Heart left ventricle (tissue), 16 donors: ENCODE measurements at regions of chr6 and their contacts with region 1.

Region 1: GRCh38 chr6:12585497-12586041 is 131.0 kb upstream of the PHACTR1 start:
- DNase-seq: peak in 4 of 5 donors; percentile 43 to 60 (median 52)
- ATAC-seq: peak; percentile 62 to 88 (median 72)
- H3K4me3 ChIP-seq: peak overlapping the region in 7 of 12 donors; percentile 3 to 35 (median 10)
- H3K27ac ChIP-seq: peak overlapping the region in 11 of 12 donors; percentile 26 to 90 (median 62)
- H3K4me1 ChIP-seq: peaks cover 0 to 15% (median 4%) of the 10 kb centered on the region in 12 donors
- H3K27me3 ChIP-seq: no peaks in the 10 kb centered on the region
- CTCF ChIP-seq: no peak
- POLR2A ChIP-seq: no peak

Region 2: GRCh38 chr6:12522347-12522746 is 63.2 kb before region 1 on chr6:
- intact Hi-C with region 1: no loop called
- DNase-seq: no peak
- ATAC-seq: no peak
- H3K4me3 ChIP-seq: no peak overlapping the region
- H3K27ac ChIP-seq: no peak overlapping the region
- H3K4me1 ChIP-seq: no peaks in the 10 kb centered on the region
- H3K27me3 ChIP-seq: no peaks in the 10 kb centered on the region
- CTCF ChIP-seq: no peak
- POLR2A ChIP-seq: no peak

Region 3: DNA sequence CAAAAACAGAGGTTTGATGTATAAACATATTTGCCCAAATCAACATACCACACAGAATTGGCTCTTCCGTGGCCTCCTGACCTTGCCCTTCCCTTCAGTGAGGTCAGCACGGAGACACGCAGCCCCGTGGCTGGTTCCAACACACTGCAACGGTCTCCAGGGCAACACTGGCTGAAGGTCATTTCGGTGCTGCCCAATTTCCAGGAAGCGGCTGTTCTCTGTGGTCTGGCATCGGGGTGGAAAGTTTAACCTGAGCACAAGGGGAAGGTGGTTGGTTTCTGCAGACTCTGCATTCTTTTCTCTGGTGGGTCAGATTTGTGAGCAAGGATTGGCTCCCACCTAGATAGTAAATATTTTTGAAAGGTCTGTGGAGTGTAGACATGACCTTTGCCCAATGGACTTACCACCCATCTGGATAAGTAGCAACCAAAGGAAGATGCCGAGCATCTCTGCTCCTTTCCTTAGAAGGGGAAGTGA is 46.6 kb before region 1 on chr6:
- intact Hi-C with region 1: loop called in 1 of 10 experiments (anchors 10 kb)
- DNase-seq: peak in 4 of 5 donors; percentile 28 to 75 (median 37)
- ATAC-seq: peak in 3 of 4 donors; percentile 79 to 96 (median 80)
- H3K4me3 ChIP-seq: no peak overlapping the region
- H3K27ac ChIP-seq: peak overlapping the region in 1 of 12 donors; percentile 36
- H3K4me1 ChIP-seq: peaks cover 0 to 19% (median 2%) of the 10 kb centered on the region in 12 donors
- H3K27me3 ChIP-seq: peaks cover 0 to 4% (median 0%) of the 10 kb centered on the region in 9 donors
- CTCF ChIP-seq: no peak
- POLR2A ChIP-seq: no peak

Region 4: GRCh38 chr6:12718015-12718414 is 132.4 kb after region 1 on chr6:
- intact Hi-C with region 1: no loop called
- DNase-seq: no peak
- ATAC-seq: no peak
- H3K4me3 ChIP-seq: no peak overlapping the region
- H3K27ac ChIP-seq: no peak overlapping the region
- H3K4me1 ChIP-seq: no peaks in the 10 kb centered on the region
- H3K27me3 ChIP-seq: peaks cover 0 to 54% (median 6%) of the 10 kb centered on the region in 9 donors
- CTCF ChIP-seq: no peak
- POLR2A ChIP-seq: no peak

Region 5: GRCh38 chr6:12751694-12752325 is 166.2 kb after region 1 on chr6:
- intact Hi-C with region 1: no loop called
- DNase-seq: peak; percentile 36 to 66 (median 47)
- ATAC-seq: peak in 3 of 4 donors; percentile 56 to 78 (median 62)
- H3K4me3 ChIP-seq: no peak overlapping the region
- H3K27ac ChIP-seq: no peak overlapping the region
- H3K4me1 ChIP-seq: peaks cover 0 to 14% (median 2%) of the 10 kb centered on the region in 12 donors
- H3K27me3 ChIP-seq: peaks cover 11 to 61% (median 30%) of the 10 kb centered on the region in 9 donors
- CTCF ChIP-seq: no peak
- POLR2A ChIP-seq: no peak